ENCODE measurements at regions of chr9 and their contacts with region 1.

Region 1: GRCh38 chr9:137236238-137236935 is 4.7 kb upstream of the TUBB4B start:
- DNase-seq: peak; percentile 82 to 97 (median 92)
- ATAC-seq: peak; percentile 39 to 68 (median 64)
- H3K4me3 ChIP-seq: peak overlapping the region in 1 of 4 donors; percentile 6
- H3K27ac ChIP-seq: no peak overlapping the region
- H3K4me1 ChIP-seq: peaks cover 5 to 19% (median 10%) of the 10 kb centered on the region in 3 donors
- H3K27me3 ChIP-seq: no peaks in the 10 kb centered on the region
- CTCF ChIP-seq: peak; percentile 99 to 100 (median 100)

Region 2: DNA sequence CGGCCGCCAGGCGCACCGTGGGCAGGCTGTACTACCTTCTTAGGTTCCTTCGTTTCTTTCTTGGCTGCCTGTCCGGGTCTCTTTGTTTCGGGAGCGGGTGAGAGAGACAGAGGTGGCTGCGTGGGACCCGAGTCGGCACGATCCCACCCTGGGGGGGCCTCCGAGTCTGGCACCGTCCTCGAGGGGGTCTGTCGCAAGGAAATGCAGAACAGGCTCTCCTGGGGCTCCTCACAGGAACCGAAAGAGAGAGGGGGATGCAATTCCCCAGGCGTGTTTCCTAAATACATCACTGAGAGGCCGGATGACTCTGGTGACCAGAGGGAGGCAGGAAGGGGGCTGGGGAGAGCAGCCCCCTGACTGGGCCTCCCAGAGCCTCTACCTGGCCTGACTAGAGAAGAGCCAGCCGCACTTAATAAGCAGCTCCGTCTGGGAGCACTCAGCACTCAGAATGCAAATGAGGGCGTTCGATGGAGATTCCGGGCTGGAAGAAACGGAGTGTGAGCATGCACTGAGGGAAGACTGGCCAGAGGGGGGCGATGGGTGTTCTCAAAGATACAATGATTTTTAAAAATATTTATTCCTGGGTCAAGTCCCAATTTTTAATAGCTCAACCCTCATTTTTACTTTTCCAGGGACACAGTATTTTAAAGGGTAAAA is 785.0 kb before region 1 on chr9:
- intact Hi-C with region 1: no loop called
- DNase-seq: no peak
- ATAC-seq: no peak
- H3K4me3 ChIP-seq: no peak overlapping the region
- H3K27ac ChIP-seq: no peak overlapping the region
- H3K4me1 ChIP-seq: no peaks in the 10 kb centered on the region
- H3K27me3 ChIP-seq: no peaks in the 10 kb centered on the region
- CTCF ChIP-seq: no peak

Region 3: DNA sequence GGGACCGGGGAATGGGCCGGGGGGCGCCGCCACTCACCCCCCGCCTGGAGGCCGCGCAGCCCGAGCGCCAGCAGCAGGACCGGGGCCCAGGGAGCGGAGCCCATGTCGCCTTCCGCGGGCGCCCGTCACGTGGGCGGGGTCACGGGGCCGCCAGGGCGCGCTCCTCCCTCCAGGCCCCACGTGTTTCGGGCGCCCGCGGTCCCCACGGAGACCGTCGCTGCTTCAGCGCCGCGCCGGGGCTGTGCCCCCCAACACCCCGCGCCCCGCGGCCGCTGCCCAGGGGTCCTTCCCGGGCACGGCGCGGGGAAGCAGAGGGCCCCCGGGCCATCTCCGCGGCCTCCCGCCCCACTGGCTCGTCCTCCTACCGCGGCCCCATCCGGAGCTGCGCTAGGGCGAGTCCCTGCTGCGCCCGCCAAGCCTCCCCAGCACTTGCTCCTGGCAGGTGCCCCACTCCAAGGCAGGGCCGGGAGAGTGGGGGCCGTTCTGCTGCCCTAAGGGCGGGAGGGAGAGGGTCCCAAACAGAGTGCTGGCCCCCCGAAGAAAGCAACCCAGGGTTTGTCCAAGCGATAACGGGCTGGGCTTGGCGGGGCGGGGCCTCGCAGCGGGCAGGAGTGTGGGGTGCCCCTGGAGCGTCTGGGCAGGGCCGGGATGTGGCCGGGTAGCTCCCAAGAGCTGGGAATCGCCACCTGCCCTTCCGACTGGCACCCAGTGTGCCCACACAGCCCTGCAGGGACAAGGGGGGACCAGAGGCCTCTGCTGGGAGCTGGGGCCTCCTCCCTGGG is 121.6 kb before region 1 on chr9 and contains the start of gene DPP7:
- intact Hi-C with region 1: loop called (anchors 5 to 10 kb)
- DNase-seq: peak; percentile 68 to 91 (median 80)
- ATAC-seq: peak; percentile 87 to 96 (median 91)
- H3K4me3 ChIP-seq: peak within 1 kb of the TSS; percentile 63 to 87 (median 79)
- H3K27ac ChIP-seq: no peak within 1 kb of the TSS
- H3K4me1 ChIP-seq: peaks cover 0 to 4% (median 0%) of the 10 kb centered on the region in 3 donors
- H3K27me3 ChIP-seq: no peaks in the 10 kb centered on the region
- CTCF ChIP-seq: no peak
- total RNA-seq, gene DPP7: 87.3 to 113 (median 98.8) TPM

Region 4: DNA sequence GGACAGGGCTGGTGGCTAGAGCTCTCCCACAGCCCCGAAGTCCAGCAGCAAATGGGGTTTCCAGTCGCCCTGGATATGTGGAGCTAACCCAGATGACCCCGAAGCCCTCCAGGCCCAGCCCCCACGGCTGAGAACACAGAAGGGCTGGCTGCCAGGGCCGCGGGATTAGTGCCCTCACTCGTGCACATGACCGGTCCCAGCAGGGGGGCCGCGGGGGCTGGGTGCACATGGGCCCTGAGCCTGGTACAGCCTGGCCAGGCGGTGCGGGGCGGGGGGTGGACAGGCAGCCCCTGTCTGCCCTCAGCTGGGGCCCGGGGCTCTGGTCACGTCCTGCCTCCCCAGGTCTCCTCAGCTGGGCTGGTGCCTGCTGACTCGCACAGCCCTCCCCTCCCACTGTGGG is 42.0 kb before region 1 on chr9:
- intact Hi-C with region 1: loop called in 1 of 3 experiments (anchors 5 kb)
- DNase-seq: peak; percentile 78 to 93 (median 90)
- ATAC-seq: peak; percentile 22 to 44 (median 33)
- H3K4me3 ChIP-seq: peak overlapping the region in 2 of 4 donors; percentile 57 to 80
- H3K27ac ChIP-seq: peak overlapping the region; percentile 60 to 90 (median 74)
- H3K4me1 ChIP-seq: peaks cover 27 to 52% (median 35%) of the 10 kb centered on the region in 3 donors
- H3K27me3 ChIP-seq: no peaks in the 10 kb centered on the region
- CTCF ChIP-seq: no peak

Measured in pancreas (tissue), 10 donors.